Activated CD4-positive, alpha-beta memory T cell treated with anti-CD3 and anti-CD28 coated beads for 36 hours (primary cell): ENCODE measurements at regions of chr12 and their contacts with region 1.

Region 1: DNA sequence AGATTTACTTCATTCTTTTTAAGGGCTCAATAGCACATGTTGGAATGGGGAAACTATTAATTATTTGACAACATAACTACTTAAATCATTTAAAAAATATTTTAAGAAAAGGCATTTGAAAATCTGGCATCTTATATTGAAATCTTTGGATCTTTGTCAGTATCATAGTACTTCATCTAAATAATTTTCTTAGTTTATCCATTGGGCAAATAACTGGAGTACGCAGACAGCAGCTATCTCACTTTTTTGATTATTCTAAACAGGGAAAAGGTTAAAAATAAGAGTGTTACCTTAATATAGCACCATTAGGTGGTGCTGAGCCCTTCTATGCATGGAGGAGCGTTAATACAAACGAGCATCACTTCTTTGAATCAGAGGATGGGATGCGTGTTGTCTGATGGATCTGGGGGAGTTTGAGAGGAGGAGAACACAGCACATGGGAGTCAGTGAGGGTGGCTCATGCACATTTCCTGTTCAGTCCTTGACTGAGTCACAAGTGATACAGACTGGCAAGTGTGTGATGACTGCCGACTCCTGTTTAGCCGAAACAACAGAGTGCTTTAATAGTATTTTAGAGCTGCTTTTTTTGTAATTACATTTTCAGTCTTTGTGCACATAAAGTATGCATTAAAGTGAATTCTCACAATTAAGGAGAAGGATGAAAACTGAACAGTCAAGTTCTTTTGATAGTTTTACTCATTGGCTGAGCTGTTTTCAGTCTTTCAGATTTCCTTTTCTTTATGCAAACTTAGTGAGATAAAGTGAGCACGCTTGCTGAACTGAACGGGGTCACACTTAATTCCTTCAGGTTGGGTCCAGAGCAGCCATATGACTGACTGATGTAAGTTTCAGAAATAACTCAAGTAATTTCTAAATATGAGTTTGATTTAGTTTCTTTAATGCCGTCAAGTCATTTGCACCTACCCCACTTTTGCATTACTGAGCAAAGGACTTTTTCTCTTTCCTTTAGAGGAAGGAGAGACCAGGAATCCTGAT is 92.7 kb downstream of the DIP2B start:
- DNase-seq: peak; percentile 76
- H3K4me3 Mint-ChIP-seq: peak overlapping the region; percentile 57
- H3K27ac Mint-ChIP-seq: peak overlapping the region; percentile 78
- H3K4me1 Mint-ChIP-seq: peaks cover 42% of the 10 kb centered on the region
- H3K27me3 Mint-ChIP-seq: no peaks in the 10 kb centered on the region

Region 2: DNA sequence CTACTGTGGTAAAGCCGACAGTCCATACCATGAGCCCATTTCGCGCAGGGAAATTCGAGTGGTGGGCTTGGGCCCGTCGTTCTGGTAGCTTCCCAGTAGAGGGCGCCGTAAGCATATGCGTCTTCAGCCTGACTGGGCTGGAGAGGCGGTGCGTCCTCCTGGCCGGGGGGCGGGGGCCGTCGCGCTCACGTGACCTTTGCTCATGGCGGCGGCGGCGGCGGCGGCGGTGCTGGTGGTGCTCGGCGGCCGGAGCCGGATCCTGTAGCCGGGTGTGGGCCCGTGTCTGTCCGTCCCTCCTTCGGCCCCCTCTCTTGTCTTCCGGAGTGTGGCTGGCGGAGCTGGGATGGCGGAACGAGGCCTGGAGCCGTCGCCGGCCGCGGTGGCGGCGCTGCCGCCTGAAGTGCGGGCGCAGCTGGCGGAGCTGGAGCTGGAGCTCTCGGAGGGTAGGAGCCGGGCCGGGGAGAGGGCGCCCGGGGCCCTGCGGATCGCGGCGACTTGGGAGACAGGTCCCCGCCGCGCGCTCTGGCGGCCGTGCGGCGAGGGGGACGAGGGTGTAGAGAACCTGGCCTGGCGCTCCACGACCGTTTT is 92.6 kb before region 1 on chr12 and contains the start of gene DIP2B:
- CTCF ChIA-PET with region 1: interaction called, 6 read pairs
- POLR2A ChIA-PET with region 1: interaction called, 3 read pairs
- intact Hi-C with region 1: loop called (anchors 1 kb)
- DNase-seq: peak; percentile 96
- H3K4me3 Mint-ChIP-seq: peak within 1 kb of the TSS; percentile 99
- H3K27ac Mint-ChIP-seq: peak within 1 kb of the TSS; percentile 93
- H3K4me1 Mint-ChIP-seq: peaks cover 42% of the 10 kb centered on the region
- H3K27me3 Mint-ChIP-seq: no peaks in the 10 kb centered on the region
- total RNA-seq, gene DIP2B: 23.3 to 23.7 TPM

Region 3: DNA sequence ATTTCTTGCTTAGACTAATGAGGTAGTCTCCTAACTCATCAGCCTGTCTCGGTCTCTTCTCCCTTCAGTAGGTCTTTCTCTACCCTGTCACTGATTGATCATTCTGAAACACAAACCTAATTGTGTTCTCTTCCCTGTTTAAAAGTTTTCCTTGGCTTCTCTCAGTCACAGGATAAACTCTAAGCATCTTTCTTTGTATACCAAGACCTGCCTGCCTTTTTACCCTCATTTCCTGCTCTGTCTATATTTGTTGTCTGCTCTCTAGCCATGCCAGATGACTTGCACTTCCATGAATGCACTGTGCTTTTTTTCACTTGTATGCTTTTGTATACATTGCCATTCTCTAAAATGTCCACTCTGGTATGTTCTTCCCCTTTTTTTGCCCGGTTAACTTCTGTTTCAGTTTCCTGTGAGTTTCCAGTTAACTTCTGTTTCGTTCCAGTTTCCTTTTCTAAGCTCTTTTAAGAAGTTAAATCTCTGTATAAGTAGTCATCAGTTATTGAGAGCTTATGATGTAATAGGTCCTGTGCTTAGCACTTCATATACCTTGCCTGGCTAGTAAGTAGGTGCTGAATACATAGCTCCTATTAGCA is 79.9 kb before region 1 on chr12:
- CTCF ChIA-PET with region 1: no interaction called
- POLR2A ChIA-PET with region 1: no interaction called
- intact Hi-C with region 1: loop called (anchors 1 kb)
- DNase-seq: no peak
- H3K4me3 Mint-ChIP-seq: no peak overlapping the region
- H3K27ac Mint-ChIP-seq: no peak overlapping the region
- H3K4me1 Mint-ChIP-seq: peaks cover 53% of the 10 kb centered on the region
- H3K27me3 Mint-ChIP-seq: no peaks in the 10 kb centered on the region

Region 4: DNA sequence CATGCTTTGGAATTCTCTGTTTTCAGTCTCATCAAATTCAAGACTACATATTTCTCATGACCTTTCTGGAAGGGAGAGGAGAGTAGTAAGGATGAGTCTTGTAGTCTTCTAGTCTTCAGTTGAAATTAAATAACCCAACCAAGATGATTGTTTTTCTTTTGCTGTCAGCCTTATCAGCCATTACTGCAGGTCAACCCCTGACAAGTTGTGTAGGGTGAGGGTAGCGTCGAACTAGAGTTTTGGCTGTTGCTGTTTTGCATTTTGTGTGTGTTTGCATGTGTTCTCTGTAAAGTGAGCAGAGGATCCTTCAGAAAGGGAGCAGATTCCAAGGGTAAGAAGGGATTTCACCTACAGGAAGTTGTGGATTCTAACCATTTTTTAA is 64.3 kb before region 1 on chr12:
- CTCF ChIA-PET with region 1: interaction called, 3 read pairs
- POLR2A ChIA-PET with region 1: interaction called, 3 read pairs
- intact Hi-C with region 1: loop called (anchors 5 kb)
- DNase-seq: no peak
- H3K4me3 Mint-ChIP-seq: no peak overlapping the region
- H3K27ac Mint-ChIP-seq: no peak overlapping the region
- H3K4me1 Mint-ChIP-seq: peaks cover 38% of the 10 kb centered on the region
- H3K27me3 Mint-ChIP-seq: no peaks in the 10 kb centered on the region

Region 5: GRCh38 chr12:50542448-50542847 is 55.0 kb before region 1 on chr12:
- CTCF ChIA-PET with region 1: interaction called, 3 read pairs
- POLR2A ChIA-PET with region 1: interaction called, 4 read pairs
- intact Hi-C with region 1: loop called (anchors 1 kb)
- DNase-seq: peak; percentile 41
- H3K4me3 Mint-ChIP-seq: no peak overlapping the region
- H3K27ac Mint-ChIP-seq: peak overlapping the region; percentile 87
- H3K4me1 Mint-ChIP-seq: peaks cover 48% of the 10 kb centered on the region
- H3K27me3 Mint-ChIP-seq: no peaks in the 10 kb centered on the region

Region 6: GRCh38 chr12:50555471-50555885 is 42.0 kb before region 1 on chr12:
- CTCF ChIA-PET with region 1: no interaction called
- POLR2A ChIA-PET with region 1: no interaction called
- intact Hi-C with region 1: loop called (anchors 5 kb)
- DNase-seq: peak; percentile 66
- H3K4me3 Mint-ChIP-seq: peak overlapping the region; percentile 58
- H3K27ac Mint-ChIP-seq: peak overlapping the region; percentile 94
- H3K4me1 Mint-ChIP-seq: peaks cover 53% of the 10 kb centered on the region
- H3K27me3 Mint-ChIP-seq: no peaks in the 10 kb centered on the region

Region 7: DNA sequence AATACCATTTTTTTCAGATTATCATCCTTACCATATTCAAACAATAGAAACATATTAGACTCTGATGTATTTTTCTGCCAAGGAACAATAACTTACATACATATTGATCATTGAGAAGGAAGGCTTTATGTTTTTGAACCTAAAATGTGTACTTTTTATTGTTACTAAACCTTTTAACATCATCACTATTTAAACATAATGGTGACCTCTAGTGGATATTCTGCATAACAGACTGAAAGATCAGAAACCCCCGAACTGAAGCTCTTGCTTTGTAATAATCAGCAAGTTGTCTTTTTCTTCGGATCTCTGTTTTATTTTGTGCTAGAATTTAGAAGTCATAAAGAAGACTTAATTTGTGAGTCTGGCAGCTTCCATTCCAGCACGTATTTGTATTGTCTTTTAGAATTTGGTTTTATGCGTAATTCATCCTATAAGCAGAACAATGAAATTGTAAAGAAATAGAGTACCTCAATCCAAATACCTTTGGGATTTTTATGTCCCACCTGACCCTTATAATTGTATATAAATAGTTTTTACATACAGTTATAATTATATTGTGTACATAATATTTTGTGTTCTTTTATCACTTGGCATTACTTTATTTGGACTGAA is 40.5 kb after region 1 on chr12:
- CTCF ChIA-PET with region 1: interaction called, 4 read pairs
- POLR2A ChIA-PET with region 1: no interaction called
- intact Hi-C with region 1: loop called (anchors 5 kb)
- DNase-seq: no peak
- H3K4me3 Mint-ChIP-seq: no peak overlapping the region
- H3K27ac Mint-ChIP-seq: peak overlapping the region; percentile 71
- H3K4me1 Mint-ChIP-seq: peaks cover 41% of the 10 kb centered on the region
- H3K27me3 Mint-ChIP-seq: no peaks in the 10 kb centered on the region

Region 8: DNA sequence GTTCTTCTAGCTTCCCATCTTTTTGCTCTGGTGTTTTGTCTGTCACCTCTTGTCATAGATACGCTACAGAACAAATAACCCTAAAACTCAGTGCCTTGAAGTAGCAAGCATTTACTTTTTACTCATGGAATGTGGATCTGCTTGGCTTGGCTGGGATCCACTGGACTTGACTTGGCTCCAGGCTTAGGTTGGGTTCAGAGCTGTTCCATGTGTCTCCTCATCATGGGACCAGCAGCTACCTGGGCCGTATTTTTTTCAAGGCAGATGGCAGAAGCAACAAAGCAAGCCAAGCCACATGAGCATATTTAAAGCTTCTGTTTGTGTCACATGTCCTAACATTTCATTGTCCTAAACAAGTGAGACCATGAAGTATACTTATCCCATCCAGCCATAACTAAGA is 117.7 kb after region 1 on chr12:
- CTCF ChIA-PET with region 1: no interaction called
- POLR2A ChIA-PET with region 1: no interaction called
- intact Hi-C with region 1: no loop called
- DNase-seq: no peak
- H3K4me3 Mint-ChIP-seq: no peak overlapping the region
- H3K27ac Mint-ChIP-seq: no peak overlapping the region
- H3K4me1 Mint-ChIP-seq: no peaks in the 10 kb centered on the region
- H3K27me3 Mint-ChIP-seq: no peaks in the 10 kb centered on the region